ENCODE measurements at regions of chr12 and their contacts with region 1.

Region 1: DNA sequence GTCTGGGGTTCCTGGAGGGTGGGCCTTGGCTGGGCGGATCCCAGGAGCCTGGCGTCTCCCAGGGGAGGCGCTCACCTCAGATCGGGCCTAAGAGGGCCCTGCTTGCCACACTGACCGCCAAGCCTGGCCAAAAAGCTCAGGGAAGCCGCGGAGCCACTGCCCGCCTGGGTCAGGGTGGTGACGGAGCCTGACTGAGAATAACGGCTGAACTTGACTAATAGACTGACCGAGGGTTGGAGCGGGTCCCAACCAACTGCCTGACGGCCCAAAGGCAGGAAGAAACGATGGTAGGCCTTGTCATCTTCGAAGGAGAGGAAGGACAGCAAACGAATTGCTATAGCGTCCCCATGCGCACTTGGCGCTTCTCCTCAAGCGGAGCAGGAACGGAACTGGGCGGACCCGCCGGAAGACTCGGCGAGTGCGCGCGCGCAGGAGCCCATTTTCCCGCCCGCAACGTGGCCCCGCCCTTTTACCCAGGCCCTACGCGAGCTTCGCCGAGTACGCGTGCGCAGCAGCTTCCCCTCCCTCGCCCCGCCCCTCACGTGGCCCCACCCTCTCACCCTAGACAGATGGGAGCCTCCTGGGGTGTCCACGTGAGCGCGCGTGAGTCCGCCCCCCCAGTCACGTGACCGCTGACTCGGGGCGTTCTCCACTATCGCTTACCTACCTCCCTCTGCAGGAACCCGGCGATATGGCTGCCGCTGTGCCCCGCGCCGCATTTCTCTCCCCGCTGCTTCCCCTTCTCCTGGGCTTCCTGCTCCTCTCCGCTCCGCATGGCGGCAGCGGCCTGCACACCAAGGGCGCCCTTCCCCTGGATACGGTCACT is at the starts of genes ERP29 and TMEM116:
- DNase-seq: peak; percentile 100
- H3K4me3 Mint-ChIP-seq: peak within 1 kb of the TSS; percentile 93
- H3K27ac Mint-ChIP-seq: peak within 1 kb of the TSS; percentile 95
- H3K4me1 Mint-ChIP-seq: peaks cover 53% of the 10 kb centered on the region
- H3K27me3 Mint-ChIP-seq: no peaks in the 10 kb centered on the region
- total RNA-seq, gene ERP29: 169 to 172 TPM
- total RNA-seq, gene TMEM116: 17.8 to 19.7 TPM

Region 2: DNA sequence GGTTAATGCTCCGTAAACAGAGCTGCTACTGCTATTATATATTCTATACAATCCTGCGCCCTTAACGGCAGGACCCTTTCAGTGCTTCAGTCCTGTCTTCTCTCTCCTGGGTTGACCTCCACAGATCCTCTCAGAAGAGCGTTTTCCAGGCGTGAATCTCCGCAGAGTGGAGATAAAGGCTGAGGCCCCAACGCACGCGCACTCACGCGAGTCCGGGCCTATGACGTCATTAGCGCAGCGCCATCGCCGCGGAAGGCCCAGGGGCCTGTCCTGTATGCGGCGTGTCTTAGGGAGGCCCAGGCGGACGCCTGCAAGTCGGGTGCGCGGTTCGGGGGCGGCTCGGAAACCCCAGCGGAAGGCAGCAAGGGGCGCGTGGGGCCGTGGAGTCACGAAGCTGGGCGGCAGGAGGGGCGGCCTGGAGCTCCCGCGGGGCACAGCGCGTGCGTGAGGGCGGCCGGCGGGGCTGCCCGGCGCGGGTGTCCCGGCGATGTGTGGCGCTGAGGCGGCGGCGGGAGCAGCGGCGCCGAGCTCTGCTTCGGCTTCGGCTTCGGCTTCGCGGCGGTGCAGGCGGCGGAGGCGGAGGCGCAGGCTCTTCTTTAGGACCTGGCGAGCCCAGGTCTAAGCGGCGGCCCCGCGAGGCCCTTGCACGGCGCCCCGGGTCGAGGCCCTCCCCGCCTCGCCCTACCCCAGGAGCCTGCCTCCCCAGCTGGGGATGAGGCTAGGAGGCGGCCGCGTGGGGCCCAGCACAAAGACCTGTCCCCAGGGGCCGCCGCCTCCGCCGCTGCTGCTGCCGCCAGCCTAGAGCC is 171.0 kb before region 1 on chr12 and contains the start of gene MAPKAPK5:
- CTCF ChIA-PET with region 1: interaction called, 4 read pairs
- POLR2A ChIA-PET with region 1: interaction called, 31 read pairs
- DNase-seq: peak; percentile 96
- H3K4me3 Mint-ChIP-seq: peak within 1 kb of the TSS; percentile 98
- H3K27ac Mint-ChIP-seq: peak within 1 kb of the TSS; percentile 92
- H3K4me1 Mint-ChIP-seq: peaks cover 51% of the 10 kb centered on the region
- H3K27me3 Mint-ChIP-seq: no peaks in the 10 kb centered on the region
- total RNA-seq, gene MAPKAPK5: 40.4 to 44.8 TPM

Region 3: GRCh38 chr12:111953455-111953854 is 59.5 kb before region 1 on chr12:
- CTCF ChIA-PET with region 1: interaction called, 22 read pairs
- POLR2A ChIA-PET with region 1: interaction called, 38 read pairs
- DNase-seq: no peak
- H3K4me3 Mint-ChIP-seq: no peak overlapping the region
- H3K27ac Mint-ChIP-seq: no peak overlapping the region
- H3K4me1 Mint-ChIP-seq: peaks cover 36% of the 10 kb centered on the region
- H3K27me3 Mint-ChIP-seq: no peaks in the 10 kb centered on the region

Region 4: DNA sequence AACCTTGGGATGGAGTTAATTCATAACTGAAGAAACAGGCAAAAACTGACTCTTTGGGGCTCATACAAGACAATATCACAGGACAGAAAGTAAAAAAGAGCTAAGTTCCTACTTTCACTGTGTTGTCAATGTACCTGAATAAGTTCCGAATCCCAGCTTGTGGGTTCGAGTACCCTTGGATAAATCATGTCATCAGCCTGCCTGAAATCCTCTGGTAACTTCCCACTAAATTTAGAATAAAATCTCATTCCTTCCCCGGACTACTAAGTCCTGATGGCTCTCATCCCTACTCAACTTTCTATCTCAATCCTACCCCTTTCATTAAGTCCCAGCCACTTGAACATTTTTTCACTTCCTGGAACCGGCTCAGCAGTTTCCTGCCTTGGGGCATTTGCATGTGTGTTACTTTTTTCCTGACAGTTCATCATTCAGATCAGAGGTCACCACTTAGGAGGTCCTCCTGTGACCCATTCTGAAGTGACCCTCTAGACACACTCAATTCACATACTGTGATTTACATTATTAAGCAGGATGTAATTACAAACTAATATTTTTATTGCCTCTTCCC is 12.9 kb after region 1 on chr12:
- CTCF ChIA-PET with region 1: interaction called, 13 read pairs
- POLR2A ChIA-PET with region 1: interaction called, 28 read pairs
- DNase-seq: no peak
- H3K4me3 Mint-ChIP-seq: no peak overlapping the region
- H3K27ac Mint-ChIP-seq: peak overlapping the region; percentile 72
- H3K4me1 Mint-ChIP-seq: peaks cover 20% of the 10 kb centered on the region
- H3K27me3 Mint-ChIP-seq: no peaks in the 10 kb centered on the region

Region 5: GRCh38 chr12:112061137-112061536 is 48.1 kb after region 1 on chr12:
- CTCF ChIA-PET with region 1: no interaction called
- POLR2A ChIA-PET with region 1: no interaction called
- DNase-seq: no peak
- H3K4me3 Mint-ChIP-seq: no peak overlapping the region
- H3K27ac Mint-ChIP-seq: no peak overlapping the region
- H3K4me1 Mint-ChIP-seq: no peaks in the 10 kb centered on the region
- H3K27me3 Mint-ChIP-seq: no peaks in the 10 kb centered on the region

Region 6: GRCh38 chr12:112108201-112109079 is 95.5 kb after region 1 on chr12 and contains the start of gene NAA25:
- CTCF ChIA-PET with region 1: interaction called, 7 read pairs
- POLR2A ChIA-PET with region 1: interaction called, 22 read pairs
- DNase-seq: peak; percentile 90
- H3K4me3 Mint-ChIP-seq: peak within 1 kb of the TSS; percentile 97
- H3K27ac Mint-ChIP-seq: peak within 1 kb of the TSS; percentile 99
- H3K4me1 Mint-ChIP-seq: peaks cover 46% of the 10 kb centered on the region
- H3K27me3 Mint-ChIP-seq: no peaks in the 10 kb centered on the region
- total RNA-seq, gene NAA25: 24.2 to 25.0 TPM

Region 7: DNA sequence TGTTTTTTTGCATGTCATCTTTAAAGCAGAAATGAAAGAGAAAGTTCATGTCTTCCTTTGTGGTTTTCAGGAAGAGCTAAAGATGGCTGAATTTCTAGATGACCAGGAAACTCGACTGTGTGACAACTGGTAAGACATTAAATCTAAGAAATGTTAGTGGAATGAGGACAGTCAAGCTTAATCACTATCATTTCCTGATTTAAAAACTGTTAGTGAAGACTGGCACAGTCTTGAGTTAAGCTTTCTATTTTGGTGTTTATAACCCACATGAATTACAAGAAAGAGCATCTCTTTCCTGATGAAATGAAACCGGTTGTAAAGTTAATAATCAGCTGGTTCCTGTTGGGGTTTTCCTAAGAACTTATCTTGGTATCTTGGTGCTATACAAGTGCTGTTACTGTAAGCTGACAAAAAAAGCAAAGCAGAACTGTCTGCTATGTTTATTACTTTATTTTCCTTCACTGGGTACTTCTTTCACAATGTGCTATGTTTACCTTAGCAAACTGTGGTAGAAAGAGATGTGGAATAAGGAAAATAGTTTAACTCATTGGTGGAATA is 117.5 kb after region 1 on chr12:
- CTCF ChIA-PET with region 1: interaction called, 9 read pairs
- POLR2A ChIA-PET with region 1: interaction called, 43 read pairs
- DNase-seq: no peak
- H3K4me3 Mint-ChIP-seq: peak overlapping the region; percentile 70
- H3K27ac Mint-ChIP-seq: peak overlapping the region; percentile 89
- H3K4me1 Mint-ChIP-seq: peaks cover 56% of the 10 kb centered on the region
- H3K27me3 Mint-ChIP-seq: no peaks in the 10 kb centered on the region